ENCODE measurements at regions of chr9 and their contacts with region 1.

Region 1: DNA sequence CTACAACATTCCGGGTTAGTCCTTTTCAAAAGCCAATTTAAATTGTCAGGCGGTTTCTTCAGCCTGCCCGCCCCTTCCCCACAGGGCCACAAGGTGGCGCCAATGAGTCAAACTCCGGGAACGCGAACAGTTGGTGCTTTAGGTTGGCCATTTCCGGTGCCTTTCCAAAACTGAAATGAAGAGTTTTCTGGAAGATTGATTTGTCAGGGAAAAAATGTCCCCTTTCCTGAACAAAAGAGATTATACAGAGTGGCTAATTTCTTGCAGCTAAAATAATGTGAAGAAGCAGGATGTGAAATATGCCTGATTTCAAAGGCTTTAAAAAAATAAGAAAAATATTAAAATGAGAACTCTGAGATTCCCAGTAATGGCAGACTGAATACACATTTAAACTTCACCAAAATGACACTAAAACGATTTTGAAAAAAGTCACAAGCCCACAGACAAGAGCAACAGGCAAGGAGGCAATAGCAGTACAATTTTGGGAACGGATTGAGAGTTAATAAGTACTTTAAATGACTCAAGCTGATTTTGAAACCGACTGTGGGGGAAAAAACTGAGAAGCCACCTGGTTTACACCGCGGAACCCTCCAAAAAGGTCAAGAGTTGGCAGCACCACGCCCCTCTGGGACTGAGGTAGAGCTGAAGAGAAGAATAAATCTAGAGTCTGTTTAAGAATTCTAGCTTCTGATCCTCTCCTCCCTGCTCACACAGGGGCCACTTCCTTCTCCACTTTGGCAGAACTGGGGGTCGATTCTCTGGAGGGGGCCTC is 45.7 kb downstream of the SLC46A2 start:
- DNase-seq: peak; percentile 90
- ATAC-seq: peak; percentile 86
- H3K4me3 ChIP-seq: no peak overlapping the region
- H3K27ac ChIP-seq: peak overlapping the region; percentile 42
- H3K4me1 ChIP-seq: peaks cover 32% of the 10 kb centered on the region
- H3K27me3 ChIP-seq: no peaks in the 10 kb centered on the region
- CTCF ChIP-seq: peak; percentile 99

Region 2: GRCh38 chr9:112750111-112750767 is 94.7 kb before region 1 on chr9 and contains the start of gene SNX30:
- intact Hi-C with region 1: no loop called
- DNase-seq: peak; percentile 96
- ATAC-seq: peak; percentile 95
- H3K4me3 ChIP-seq: peak within 1 kb of the TSS; percentile 78
- H3K27ac ChIP-seq: peak within 1 kb of the TSS; percentile 89
- H3K4me1 ChIP-seq: peaks cover 37% of the 10 kb centered on the region
- H3K27me3 ChIP-seq: no peaks in the 10 kb centered on the region
- CTCF ChIP-seq: peak; percentile 23
- total RNA-seq, gene SNX30: 76.3 TPM

Region 3: GRCh38 chr9:112784020-112784781 is 60.8 kb before region 1 on chr9:
- intact Hi-C with region 1: no loop called
- DNase-seq: no peak
- ATAC-seq: peak; percentile 40
- H3K4me3 ChIP-seq: no peak overlapping the region
- H3K27ac ChIP-seq: no peak overlapping the region
- H3K4me1 ChIP-seq: peaks cover 29% of the 10 kb centered on the region
- H3K27me3 ChIP-seq: no peaks in the 10 kb centered on the region
- CTCF ChIP-seq: no peak

Region 4: DNA sequence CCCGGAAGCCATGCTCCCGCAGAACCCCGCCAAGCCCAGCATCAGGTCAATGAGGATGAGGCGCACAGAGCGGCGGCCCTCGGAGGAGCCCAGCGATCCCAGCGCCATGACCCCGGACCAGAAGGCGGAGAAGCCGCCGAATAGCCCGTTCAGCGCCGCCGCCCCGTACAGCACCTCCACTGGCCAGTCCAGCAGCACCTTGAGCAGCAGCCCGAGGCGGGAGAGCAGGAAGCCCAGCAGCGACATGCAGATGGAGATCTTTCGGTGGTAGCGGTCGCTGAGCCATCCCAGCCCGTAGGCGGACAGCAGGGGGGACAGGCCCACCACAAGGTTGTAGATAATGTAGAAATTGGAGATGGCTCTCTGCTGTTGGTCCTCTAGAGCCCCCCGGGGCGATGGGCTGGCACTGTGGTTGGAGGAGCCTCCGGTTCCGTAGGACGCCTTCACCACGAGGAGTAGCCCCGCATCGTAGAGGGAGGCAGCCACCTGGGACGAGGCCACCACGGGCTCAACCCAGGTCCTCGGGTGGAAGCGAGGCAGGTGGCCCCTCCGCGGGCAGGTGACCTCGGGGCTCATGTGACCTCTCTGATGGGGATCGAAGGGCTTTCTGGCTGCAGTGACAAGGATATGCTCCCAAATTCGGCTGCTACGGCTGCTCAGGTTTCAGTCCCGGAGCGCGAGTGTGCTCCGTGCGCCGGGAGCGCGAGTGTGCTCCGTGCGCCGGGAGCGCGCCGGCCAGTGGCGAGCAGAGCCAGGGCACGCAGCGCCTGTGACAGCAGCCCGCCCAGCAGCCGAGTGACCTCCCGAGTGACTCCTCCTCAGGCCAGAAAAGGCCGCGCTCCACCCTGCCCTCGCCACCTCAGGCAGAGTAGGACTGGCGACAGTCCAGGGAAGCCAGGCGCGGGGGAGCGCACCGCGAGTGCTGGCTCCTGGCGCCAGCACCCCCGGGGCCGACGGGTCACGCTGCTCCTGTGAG is 45.4 kb after region 1 on chr9 and contains the start of gene SLC46A2:
- intact Hi-C with region 1: loop called (anchors 10 kb)
- DNase-seq: peak; percentile 90
- ATAC-seq: peak; percentile 84
- H3K4me3 ChIP-seq: peak within 1 kb of the TSS; percentile 52
- H3K27ac ChIP-seq: peak within 1 kb of the TSS; percentile 66
- H3K4me1 ChIP-seq: peaks cover 23% of the 10 kb centered on the region
- H3K27me3 ChIP-seq: peaks cover 12% of the 10 kb centered on the region
- CTCF ChIP-seq: no peak
- total RNA-seq, gene SLC46A2: 17.0 TPM

Region 5: DNA sequence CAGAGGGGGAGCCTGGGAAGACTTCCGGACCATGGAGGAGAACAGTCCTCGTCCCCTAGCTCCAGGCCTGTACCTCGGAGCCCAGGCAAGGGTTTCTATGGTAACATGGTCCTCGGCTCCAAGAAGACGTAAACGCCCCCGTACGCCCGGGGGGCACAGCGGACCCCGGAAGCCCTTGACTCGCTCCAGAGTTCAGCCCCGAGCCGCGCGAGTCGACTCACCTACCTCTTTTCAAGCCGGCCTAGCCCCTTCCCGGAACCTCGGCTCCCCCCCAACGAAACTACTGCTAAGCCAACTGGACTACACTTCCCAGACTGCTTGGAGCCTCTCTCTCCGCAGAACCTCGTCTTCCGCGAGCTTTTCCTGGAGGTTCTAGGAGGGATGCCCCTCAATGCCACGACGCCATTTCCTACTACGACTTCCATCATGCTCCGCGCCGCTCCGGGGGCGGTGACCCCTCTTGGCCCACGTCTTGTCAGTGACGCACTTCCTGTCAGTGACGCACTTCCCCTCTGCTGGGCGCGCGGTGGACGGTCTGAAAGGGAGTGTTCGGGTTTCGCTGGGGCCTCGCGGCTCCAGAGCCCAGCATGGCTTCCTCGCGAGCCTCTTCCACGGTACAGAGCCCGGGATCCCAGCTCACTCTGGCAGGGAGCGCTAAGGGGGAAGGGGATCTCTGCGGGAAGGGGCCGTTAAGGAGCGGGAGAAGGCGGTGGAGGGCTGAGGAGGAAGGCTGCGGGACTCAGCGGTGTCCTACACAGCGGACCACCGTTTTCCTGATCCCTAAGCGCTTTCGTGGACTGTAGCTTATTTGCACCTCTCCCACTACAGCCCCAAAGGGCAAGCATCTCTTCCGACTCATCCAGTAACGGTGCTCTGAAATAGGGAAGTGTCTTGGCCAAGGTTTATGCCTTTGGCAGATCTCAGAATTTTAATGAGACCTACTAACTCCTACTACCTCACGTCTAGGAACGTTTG is 430.5 kb after region 1 on chr9 and contains the starts of genes CDC26 and PRPF4:
- intact Hi-C with region 1: no loop called
- DNase-seq: peak; percentile 98
- ATAC-seq: peak; percentile 98
- H3K4me3 ChIP-seq: peak within 1 kb of the TSS; percentile 82
- H3K27ac ChIP-seq: peak within 1 kb of the TSS; percentile 93
- H3K4me1 ChIP-seq: peaks cover 10% of the 10 kb centered on the region
- H3K27me3 ChIP-seq: no peaks in the 10 kb centered on the region
- CTCF ChIP-seq: no peak
- total RNA-seq, gene CDC26: 29.5 TPM
- total RNA-seq, gene PRPF4: 13.2 TPM